CD8-positive, alpha-beta memory T cell (primary cell): ENCODE measurements at regions of chr17 and their contacts with region 1.

Region 1: GRCh38 chr17:39754161-39754951 is 16.6 kb downstream of the GRB7 start:
- DNase-seq: peak; percentile 94 to 99 (median 98)
- H3K4me3 ChIP-seq: peak overlapping the region; percentile 81
- H3K4me3 Mint-ChIP-seq: peak overlapping the region; percentile 75 to 92 (median 82)
- H3K27ac ChIP-seq: peak overlapping the region; percentile 90
- H3K27ac Mint-ChIP-seq: peak overlapping the region; percentile 95 to 99 (median 97)
- H3K4me1 ChIP-seq: peaks cover 58% of the 10 kb centered on the region
- H3K4me1 Mint-ChIP-seq: peaks cover 57 to 62% (median 60%) of the 10 kb centered on the region in 3 donors
- H3K27me3 ChIP-seq: no peaks in the 10 kb centered on the region
- H3K27me3 Mint-ChIP-seq: peaks cover 0 to 4% of the 10 kb centered on the region in 2 donors

Region 2: GRCh38 chr17:39730095-39730921 is 24.0 kb before region 1 on chr17 and contains the start of gene MIEN1:
- CTCF ChIA-PET with region 1: interaction called, 28 read pairs
- POLR2A ChIA-PET with region 1: interaction called, 14 read pairs
- DNase-seq: peak; percentile 91 to 95 (median 94)
- H3K4me3 ChIP-seq: peak within 1 kb of the TSS; percentile 91
- H3K4me3 Mint-ChIP-seq: peak within 1 kb of the TSS; percentile 89 to 95 (median 91)
- H3K27ac ChIP-seq: peak within 1 kb of the TSS; percentile 90
- H3K27ac Mint-ChIP-seq: peak within 1 kb of the TSS; percentile 89 to 98 (median 94)
- H3K4me1 ChIP-seq: peaks cover 15% of the 10 kb centered on the region
- H3K4me1 Mint-ChIP-seq: peaks cover 14 to 21% (median 15%) of the 10 kb centered on the region in 3 donors
- H3K27me3 ChIP-seq: no peaks in the 10 kb centered on the region
- H3K27me3 Mint-ChIP-seq: no peaks in the 10 kb centered on the region
- total RNA-seq, gene MIEN1: 42.3 to 46.2 TPM

Region 3: GRCh38 chr17:39769974-39770587 is 15.7 kb after region 1 on chr17:
- CTCF ChIA-PET with region 1: interaction called, 19 read pairs
- POLR2A ChIA-PET with region 1: interaction called, 21 read pairs
- DNase-seq: peak; percentile 20 to 83 (median 76)
- H3K4me3 ChIP-seq: peak overlapping the region; percentile 7
- H3K4me3 Mint-ChIP-seq: peak overlapping the region; percentile 94 to 99 (median 96)
- H3K27ac ChIP-seq: peak overlapping the region; percentile 11
- H3K27ac Mint-ChIP-seq: peak overlapping the region; percentile 85 to 99 (median 97)
- H3K4me1 ChIP-seq: peaks cover 100% of the 10 kb centered on the region
- H3K4me1 Mint-ChIP-seq: peaks cover 93 to 100% (median 100%) of the 10 kb centered on the region in 3 donors
- H3K27me3 ChIP-seq: no peaks in the 10 kb centered on the region
- H3K27me3 Mint-ChIP-seq: no peaks in the 10 kb centered on the region

Region 4: DNA sequence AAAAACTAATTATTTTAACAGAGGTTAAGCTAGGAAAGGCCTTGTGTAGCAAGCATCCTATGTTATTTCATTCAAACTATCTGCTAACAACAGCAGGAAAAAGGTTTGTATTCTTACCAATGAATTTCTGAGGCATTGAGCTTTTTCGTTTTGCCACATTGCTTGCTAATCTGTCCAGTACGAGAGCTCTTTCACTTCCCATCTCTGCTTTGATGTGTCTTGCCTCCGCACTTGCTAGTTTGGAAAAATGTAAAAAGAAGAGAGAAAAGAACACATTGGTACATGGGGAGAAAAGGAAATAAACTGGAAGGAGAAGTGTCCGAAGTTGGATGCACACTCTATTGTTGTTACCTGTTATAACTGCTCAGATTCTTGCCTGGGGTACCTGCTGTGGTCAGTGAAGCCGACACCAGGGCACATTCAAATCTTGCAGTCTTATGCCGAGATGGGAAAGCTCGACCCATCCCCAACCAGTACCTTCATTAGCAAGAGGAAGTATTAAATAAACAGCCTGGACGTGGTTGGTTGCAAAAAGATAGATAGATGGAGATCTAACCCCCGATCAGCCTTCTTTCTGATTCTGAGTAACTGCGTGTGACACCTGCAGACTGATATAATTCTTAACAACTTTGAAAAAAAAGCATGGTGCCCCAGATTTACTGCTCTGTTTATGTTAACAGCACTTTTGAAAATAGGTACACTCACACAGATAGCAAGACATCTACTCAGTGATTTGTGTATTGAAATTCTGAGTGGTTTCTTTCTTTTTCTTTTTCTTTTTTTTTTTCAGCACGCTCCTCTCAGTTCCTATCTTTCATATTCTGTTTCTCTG is 23.4 kb after region 1 on chr17:
- CTCF ChIA-PET with region 1: interaction called, 19 read pairs
- POLR2A ChIA-PET with region 1: interaction called, 11 read pairs
- DNase-seq: peak in 1 of 5 donors; percentile 47
- H3K4me3 ChIP-seq: peak overlapping the region; percentile 73
- H3K4me3 Mint-ChIP-seq: peak overlapping the region; percentile 94 to 99 (median 96)
- H3K27ac ChIP-seq: peak overlapping the region; percentile 58
- H3K27ac Mint-ChIP-seq: peak overlapping the region; percentile 85 to 99 (median 97)
- H3K4me1 ChIP-seq: peaks cover 83% of the 10 kb centered on the region
- H3K4me1 Mint-ChIP-seq: peaks cover 70 to 81% (median 80%) of the 10 kb centered on the region in 3 donors
- H3K27me3 ChIP-seq: no peaks in the 10 kb centered on the region
- H3K27me3 Mint-ChIP-seq: no peaks in the 10 kb centered on the region

Region 5: DNA sequence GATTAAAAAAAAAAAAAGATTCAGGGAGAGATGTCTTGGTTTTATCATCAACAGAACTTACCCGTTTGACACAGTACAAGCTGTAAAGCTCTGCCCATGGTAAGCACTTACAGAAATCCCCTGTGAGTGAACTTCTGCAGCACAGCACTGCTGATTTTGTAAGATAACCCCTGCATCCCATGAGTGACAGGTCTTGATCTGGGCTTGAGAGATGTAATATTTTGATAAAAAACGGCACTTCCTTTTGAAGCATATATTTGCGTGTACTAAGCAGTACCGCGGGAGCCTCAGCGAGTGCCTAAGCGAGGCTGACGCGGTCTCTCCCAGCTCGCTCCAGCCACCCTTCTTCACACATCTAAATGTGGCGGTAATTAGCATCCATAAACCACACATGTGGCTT is 59.3 kb after region 1 on chr17:
- CTCF ChIA-PET with region 1: interaction called, 29 read pairs
- POLR2A ChIA-PET with region 1: interaction called, 5 read pairs
- DNase-seq: peak; percentile 49 to 82 (median 79)
- H3K4me3 ChIP-seq: peak overlapping the region; percentile 13
- H3K4me3 Mint-ChIP-seq: peak overlapping the region; percentile 57 to 85 (median 79)
- H3K27ac ChIP-seq: peak overlapping the region; percentile 5
- H3K27ac Mint-ChIP-seq: peak overlapping the region; percentile 81 to 97 (median 90)
- H3K4me1 ChIP-seq: peaks cover 76% of the 10 kb centered on the region
- H3K4me1 Mint-ChIP-seq: peaks cover 67 to 93% (median 86%) of the 10 kb centered on the region in 3 donors
- H3K27me3 ChIP-seq: no peaks in the 10 kb centered on the region
- H3K27me3 Mint-ChIP-seq: no peaks in the 10 kb centered on the region

Region 6: DNA sequence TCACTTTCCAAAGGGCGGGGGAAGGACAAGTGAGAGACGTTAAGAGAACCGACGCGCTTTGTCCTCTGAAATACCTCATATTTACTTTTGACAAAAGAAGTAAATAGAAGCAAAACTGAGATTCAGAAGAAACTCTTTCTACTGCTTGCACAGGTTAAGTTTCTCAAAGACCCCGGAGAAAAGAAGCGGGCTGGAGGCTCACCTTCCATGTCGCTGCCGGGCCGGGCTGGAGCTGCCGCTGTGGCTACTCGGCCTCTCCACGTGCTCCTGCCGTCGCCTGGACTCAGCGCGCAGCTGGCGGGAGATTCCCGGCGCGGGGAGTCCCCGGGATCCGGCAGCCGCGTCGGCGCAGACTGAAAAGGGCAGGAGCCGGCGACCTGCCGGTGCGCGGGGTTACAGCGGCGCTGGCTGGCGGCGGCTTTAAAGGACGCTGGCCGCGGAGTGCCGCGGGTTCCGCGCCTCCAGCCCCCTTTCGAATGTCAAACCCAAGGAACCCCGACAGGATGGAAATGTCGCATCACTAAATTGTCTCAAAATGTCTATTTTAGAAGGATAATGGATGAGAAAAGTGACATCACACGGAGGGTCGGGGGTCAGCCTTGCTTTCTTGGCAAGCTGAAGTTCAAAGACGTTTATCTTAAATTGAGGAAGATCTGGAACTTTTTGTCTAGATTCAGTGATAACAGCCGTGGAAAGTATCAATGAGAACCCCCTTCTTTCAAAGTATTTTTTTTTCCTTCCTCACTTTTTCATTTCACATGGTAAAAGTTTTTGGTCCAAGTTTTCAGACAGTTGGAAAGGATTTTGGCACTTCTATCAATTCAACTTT is 109.8 kb after region 1 on chr17 and contains the start of gene IKZF3:
- CTCF ChIA-PET with region 1: interaction called, 9 read pairs
- POLR2A ChIA-PET with region 1: interaction called, 14 read pairs
- DNase-seq: peak; percentile 76 to 89 (median 83)
- H3K4me3 ChIP-seq: peak within 1 kb of the TSS; percentile 86
- H3K4me3 Mint-ChIP-seq: peak within 1 kb of the TSS; percentile 84 to 99 (median 93)
- H3K27ac ChIP-seq: peak within 1 kb of the TSS; percentile 95
- H3K27ac Mint-ChIP-seq: peak within 1 kb of the TSS; percentile 96 to 99 (median 98)
- H3K4me1 ChIP-seq: peaks cover 52% of the 10 kb centered on the region
- H3K4me1 Mint-ChIP-seq: peaks cover 61 to 86% (median 70%) of the 10 kb centered on the region in 3 donors
- H3K27me3 ChIP-seq: no peaks in the 10 kb centered on the region
- H3K27me3 Mint-ChIP-seq: peaks cover 0 to 3% of the 10 kb centered on the region in 2 donors
- total RNA-seq, gene IKZF3: 119 to 126 TPM

Region 7: GRCh38 chr17:39927101-39927928 is 173.0 kb after region 1 on chr17 and contains the starts of genes LRRC3C and ORMDL3:
- CTCF ChIA-PET with region 1: interaction called, 10 read pairs
- POLR2A ChIA-PET with region 1: interaction called, 3 read pairs
- DNase-seq: peak; percentile 83 to 92 (median 89)
- H3K4me3 ChIP-seq: peak within 1 kb of the TSS; percentile 71
- H3K4me3 Mint-ChIP-seq: peak within 1 kb of the TSS; percentile 85 to 96 (median 92)
- H3K27ac ChIP-seq: peak within 1 kb of the TSS; percentile 57
- H3K27ac Mint-ChIP-seq: peak within 1 kb of the TSS; percentile 91 to 98 (median 94)
- H3K4me1 ChIP-seq: peaks cover 46% of the 10 kb centered on the region
- H3K4me1 Mint-ChIP-seq: peaks cover 41 to 56% (median 46%) of the 10 kb centered on the region in 3 donors
- H3K27me3 ChIP-seq: no peaks in the 10 kb centered on the region
- H3K27me3 Mint-ChIP-seq: no peaks in the 10 kb centered on the region
- total RNA-seq, gene LRRC3C: not detected
- total RNA-seq, gene ORMDL3: 73.6 to 76.4 TPM